Aorta (tissue), 5 donors: ENCODE measurements at regions of chr5 and their contacts with region 1.

Region 1: DNA sequence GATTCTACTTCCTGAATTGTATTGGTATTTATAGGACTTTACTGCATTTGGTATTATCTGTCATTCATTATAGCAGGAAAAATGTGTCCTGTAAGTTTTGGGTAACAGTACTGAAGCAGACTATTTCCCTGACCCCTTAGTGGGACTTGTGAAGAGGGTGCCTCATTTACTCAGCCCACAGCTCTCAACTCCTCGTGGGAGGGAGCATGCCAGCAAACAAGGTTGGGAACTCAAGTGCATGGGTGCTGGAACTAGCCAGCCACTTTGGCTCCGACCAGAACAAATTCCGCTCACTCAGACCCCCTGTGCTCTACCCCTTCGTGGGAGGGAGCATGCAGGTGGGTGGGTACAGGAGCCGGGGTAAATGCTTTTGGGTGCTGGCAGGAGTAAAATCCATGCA is 1773.5 kb upstream of the WWC1 start:
- DNase-seq: no peak
- ATAC-seq: no peak
- H3K4me3 ChIP-seq: no peak overlapping the region
- H3K27ac ChIP-seq: no peak overlapping the region
- H3K4me1 ChIP-seq: no peaks in the 10 kb centered on the region
- H3K27me3 ChIP-seq: no peaks in the 10 kb centered on the region

Region 2: GRCh38 chr5:166245556-166245955 is 272.4 kb before region 1 on chr5:
- intact Hi-C with region 1: loop called in 1 of 2 experiments (anchors 5 kb)
- DNase-seq: no peak
- ATAC-seq: no peak
- H3K4me3 ChIP-seq: no peak overlapping the region
- H3K27ac ChIP-seq: no peak overlapping the region
- H3K4me1 ChIP-seq: no peaks in the 10 kb centered on the region
- H3K27me3 ChIP-seq: no peaks in the 10 kb centered on the region

Region 3: DNA sequence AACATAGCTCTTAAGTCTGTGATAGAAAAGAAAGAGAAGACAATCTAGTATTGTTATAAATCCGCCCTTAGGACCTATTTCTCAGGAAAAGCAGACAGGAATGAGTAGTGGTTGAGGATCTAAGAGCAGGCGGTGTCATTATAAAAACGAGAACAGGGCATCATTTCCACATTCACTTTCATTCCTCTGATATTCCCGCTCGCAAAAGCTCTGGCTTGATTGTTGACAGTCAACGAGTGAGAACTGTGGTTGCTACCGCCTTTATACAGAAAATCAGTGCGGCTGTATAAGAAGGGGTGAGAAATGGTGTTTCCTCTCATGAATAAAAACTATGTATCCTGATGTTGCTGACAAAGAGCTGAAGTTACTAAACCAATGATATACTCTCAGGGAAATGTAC is 363.8 kb after region 1 on chr5:
- intact Hi-C with region 1: no loop called
- DNase-seq: no peak
- ATAC-seq: no peak
- H3K4me3 ChIP-seq: no peak overlapping the region
- H3K27ac ChIP-seq: no peak overlapping the region
- H3K4me1 ChIP-seq: no peaks in the 10 kb centered on the region
- H3K27me3 ChIP-seq: no peaks in the 10 kb centered on the region